Activated naive CD4-positive, alpha-beta T cell treated with anti-CD3 and anti-CD28 coated beads for 36 hours (primary cell): ENCODE measurements at regions of chr10 and their contacts with region 1.

Region 1: GRCh38 chr10:100148353-100149211 is 37.2 kb downstream of the ERLIN1 start:
- DNase-seq: peak; percentile 81
- H3K4me3 Mint-ChIP-seq: no peak overlapping the region
- H3K27ac Mint-ChIP-seq: peak overlapping the region; percentile 80
- H3K4me1 Mint-ChIP-seq: peaks cover 30% of the 10 kb centered on the region
- H3K27me3 Mint-ChIP-seq: peaks cover 3% of the 10 kb centered on the region

Region 2: GRCh38 chr10:99870123-99870730 is 278.4 kb before region 1 on chr10:
- CTCF ChIA-PET with region 1: no interaction called
- intact Hi-C with region 1: loop called (anchors 1 kb)
- DNase-seq: peak; percentile 75
- H3K4me3 Mint-ChIP-seq: no peak overlapping the region
- H3K27ac Mint-ChIP-seq: peak overlapping the region; percentile 46
- H3K4me1 Mint-ChIP-seq: peaks cover 14% of the 10 kb centered on the region
- H3K27me3 Mint-ChIP-seq: peaks cover 80% of the 10 kb centered on the region

Region 3: DNA sequence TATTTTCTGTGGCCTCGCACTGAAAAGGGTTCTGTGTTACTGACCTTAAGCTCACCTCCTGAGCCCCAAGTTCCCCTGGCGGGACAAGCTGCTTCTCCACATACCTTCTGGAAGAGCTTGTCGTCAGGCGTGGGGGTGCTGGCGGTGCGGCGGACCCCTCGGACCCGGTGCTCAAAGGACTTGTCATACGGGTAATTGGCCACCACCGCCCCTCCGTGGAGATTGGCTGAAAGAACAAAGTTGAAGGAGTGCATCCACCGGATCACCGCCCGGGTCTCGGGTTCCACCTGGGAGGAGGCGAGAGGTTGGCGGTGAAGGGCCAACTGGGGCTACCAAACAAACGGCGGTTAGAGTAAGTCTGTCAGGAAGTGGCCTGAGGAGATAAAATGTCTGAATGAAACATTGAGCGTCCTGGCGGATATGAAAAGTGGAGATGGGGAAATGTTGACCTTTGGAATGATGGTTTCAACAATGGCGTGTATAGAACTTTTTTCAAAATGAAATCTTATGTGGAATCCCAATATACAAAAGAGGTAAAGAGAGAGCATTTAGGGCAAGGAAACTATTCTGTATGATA is 83.4 kb before region 1 on chr10:
- CTCF ChIA-PET with region 1: no interaction called
- intact Hi-C with region 1: no loop called
- DNase-seq: no peak
- H3K4me3 Mint-ChIP-seq: no peak overlapping the region
- H3K27ac Mint-ChIP-seq: no peak overlapping the region
- H3K4me1 Mint-ChIP-seq: no peaks in the 10 kb centered on the region
- H3K27me3 Mint-ChIP-seq: peaks cover 24% of the 10 kb centered on the region

Region 4: DNA sequence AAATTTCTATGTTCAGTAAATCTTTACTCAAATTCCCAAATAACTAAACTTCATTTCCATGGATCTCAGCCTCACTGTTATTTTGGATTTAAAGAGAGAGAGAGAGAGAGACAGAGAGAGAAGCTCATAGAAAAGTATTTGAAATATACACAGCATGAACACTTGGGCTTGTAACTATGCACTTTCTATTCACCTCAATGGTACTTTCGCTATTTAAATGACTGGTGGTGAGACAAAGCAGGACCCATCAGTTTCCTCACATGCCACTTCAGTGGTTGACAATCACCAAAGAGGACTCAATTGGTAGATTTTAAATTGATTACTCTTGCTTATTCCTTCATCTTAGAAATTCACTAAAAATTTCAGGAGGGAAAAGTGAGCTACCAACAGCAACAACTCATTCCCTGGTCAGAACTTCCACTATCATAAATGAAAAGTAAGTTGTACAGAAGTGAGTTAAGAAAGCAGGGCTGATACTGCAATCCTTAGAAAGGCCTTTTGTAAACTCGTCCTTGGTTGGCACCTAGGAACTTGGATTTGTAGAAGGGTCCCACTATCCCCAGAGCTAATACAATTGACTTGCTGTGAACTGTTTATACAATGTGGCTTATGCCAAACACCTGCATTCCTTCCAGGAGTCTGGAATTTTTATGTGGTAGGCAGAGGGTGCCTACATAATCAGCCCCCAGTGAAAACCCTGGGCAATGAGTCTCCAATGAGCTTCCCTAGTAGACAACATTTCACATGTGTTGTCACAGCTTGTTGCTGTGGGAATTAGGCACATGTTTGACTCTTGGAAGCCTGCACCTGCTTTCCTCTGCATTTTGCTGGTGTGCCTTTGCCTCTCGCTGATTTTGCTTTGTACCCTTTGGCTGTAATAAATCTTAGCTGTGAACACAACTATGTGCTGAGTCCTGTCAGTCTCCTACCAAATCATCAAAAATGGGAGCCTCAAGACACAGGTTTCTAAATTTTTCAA is 26.4 kb after region 1 on chr10:
- CTCF ChIA-PET with region 1: interaction called, 4 read pairs
- intact Hi-C with region 1: loop called (anchors 1 kb)
- DNase-seq: peak; percentile 32
- H3K4me3 Mint-ChIP-seq: no peak overlapping the region
- H3K27ac Mint-ChIP-seq: peak overlapping the region; percentile 72
- H3K4me1 Mint-ChIP-seq: peaks cover 48% of the 10 kb centered on the region
- H3K27me3 Mint-ChIP-seq: no peaks in the 10 kb centered on the region

Region 5: GRCh38 chr10:100267237-100268104 is 118.9 kb after region 1 on chr10 and contains the start of gene CWF19L1:
- CTCF ChIA-PET with region 1: no interaction called
- intact Hi-C with region 1: loop called (anchors 1 kb)
- DNase-seq: peak; percentile 90
- H3K4me3 Mint-ChIP-seq: peak within 1 kb of the TSS; percentile 100
- H3K27ac Mint-ChIP-seq: peak within 1 kb of the TSS; percentile 97
- H3K4me1 Mint-ChIP-seq: peaks cover 29% of the 10 kb centered on the region
- H3K27me3 Mint-ChIP-seq: no peaks in the 10 kb centered on the region
- total RNA-seq, gene CWF19L1: 35.3 to 35.4 TPM

Region 6: DNA sequence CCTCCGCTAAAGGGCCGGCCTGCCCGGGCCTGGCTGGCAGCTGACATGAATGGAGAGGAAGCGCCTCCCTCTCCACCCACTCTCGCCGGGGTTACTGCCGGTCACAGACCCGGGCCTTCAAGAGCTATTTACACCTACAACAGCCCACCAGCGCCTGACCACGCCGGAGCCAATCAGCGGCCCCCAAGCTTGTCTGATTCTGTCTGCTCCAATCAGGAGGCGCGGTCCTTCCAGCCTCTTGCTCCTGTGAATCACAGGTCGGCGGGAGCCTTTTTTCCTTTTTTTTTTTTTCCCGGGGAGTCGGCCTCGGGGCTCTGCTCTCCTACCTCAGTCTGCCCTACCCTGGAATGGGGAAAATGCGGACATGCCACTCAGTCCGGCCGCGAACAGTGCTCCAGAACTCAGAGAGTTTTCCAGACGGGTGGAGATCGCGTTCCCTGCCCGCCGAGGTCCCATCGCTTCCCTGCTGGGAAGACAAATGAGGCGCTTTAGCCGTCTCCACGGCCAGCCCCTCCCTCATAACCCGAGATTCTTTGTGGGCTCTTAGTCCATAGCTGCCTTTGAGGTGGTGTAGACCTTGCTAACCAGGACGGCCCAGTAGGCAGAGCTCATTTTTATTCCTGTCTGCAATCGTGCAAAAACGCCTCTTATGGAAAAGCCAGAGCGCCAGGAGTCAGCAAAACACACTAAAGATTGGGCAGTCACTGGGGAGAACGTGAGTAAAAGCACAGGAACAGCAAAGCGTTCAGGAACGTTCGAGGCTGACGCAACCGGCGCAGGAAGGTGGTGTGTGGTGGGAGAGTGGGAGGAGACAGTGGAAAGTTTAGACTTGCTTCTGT is 224.9 kb after region 1 on chr10:
- CTCF ChIA-PET with region 1: no interaction called
- intact Hi-C with region 1: loop called (anchors 1 kb)
- DNase-seq: peak; percentile 99
- H3K4me3 Mint-ChIP-seq: no peak overlapping the region
- H3K27ac Mint-ChIP-seq: no peak overlapping the region
- H3K4me1 Mint-ChIP-seq: peaks cover 30% of the 10 kb centered on the region
- H3K27me3 Mint-ChIP-seq: no peaks in the 10 kb centered on the region